Sigmoid colon (tissue), 7 donors: ENCODE measurements at regions of chr19 and their contacts with region 1.

Region 1: DNA sequence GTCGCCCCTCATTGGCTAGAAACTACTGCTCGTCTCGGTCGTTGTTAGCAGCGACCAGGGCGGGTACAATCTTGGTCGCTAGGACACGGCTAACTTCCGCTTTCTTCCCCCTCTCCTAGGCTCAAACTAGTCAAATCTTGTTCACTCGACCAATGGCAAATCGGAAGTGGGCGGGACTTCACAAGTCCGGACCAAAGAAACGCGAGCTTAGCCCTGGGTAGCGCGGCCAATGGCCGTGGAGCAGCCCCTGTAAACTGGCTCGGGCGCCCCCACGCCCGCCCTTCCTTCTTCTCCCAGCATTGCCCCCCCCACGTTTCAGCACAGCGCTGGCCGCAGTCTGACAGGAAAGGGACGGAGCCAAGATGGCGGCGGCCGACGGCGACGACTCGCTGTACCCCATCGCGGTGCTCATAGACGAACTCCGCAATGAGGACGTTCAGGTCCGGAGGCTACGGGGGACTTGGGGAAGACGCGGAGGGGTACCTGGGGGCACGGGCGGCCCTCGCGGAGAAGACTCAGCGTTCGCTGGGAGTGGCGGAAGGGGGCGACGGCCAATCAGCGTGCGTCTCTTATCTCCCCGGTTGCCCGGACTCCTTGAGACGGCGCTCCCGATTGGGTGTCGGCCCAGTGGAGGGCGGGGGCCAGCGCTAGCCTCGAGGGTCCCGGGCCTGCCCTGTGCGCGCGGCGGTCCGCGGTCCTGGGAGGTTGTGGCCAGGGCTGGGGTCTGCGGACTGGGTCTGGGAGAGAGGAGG is at the start of gene PPP2R1A:
- DNase-seq: peak; percentile 100
- H3K4me3 ChIP-seq: peak within 1 kb of the TSS; percentile 77 to 82 (median 80)
- H3K27ac ChIP-seq: peak within 1 kb of the TSS; percentile 94 to 97 (median 95)
- H3K4me1 ChIP-seq: peaks cover 0 to 53% (median 49%) of the 10 kb centered on the region in 4 donors
- H3K27me3 ChIP-seq: no peaks in the 10 kb centered on the region
- CTCF ChIP-seq: no peak
- EP300 ChIP-seq: no peak
- POLR2A ChIP-seq: peak; percentile 94 to 97
- total RNA-seq, gene PPP2R1A: 127 to 163 (median 137) TPM

Region 2: DNA sequence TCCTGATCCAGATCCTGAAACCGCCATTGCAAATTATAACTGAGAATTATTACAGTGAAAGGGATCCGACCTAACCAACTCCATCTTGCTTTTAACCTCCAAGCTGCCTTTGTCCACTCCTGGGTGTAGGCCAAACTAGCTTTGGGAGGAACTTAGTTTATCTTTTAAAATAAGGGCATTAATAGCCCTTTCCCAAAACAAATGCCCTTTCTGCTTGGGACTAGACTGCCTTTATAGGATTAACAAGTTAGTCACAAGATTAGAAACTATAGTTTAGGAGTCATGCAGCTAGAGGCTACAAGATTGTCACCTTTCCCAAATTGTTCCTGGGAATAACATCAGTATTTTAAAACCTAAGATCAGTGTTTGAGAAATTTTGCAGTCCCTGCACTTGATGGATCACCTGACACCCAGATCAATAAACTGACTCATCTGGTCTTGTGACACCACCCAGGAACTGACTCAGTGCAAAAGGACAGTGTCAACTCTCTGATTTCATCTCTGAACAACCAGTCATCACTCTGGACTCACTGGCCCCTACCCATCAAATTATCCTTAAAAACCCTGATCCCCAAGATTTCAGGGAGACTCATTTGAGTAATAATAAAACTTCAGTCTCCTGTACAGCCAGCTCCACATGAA is 90.3 kb before region 1 on chr19:
- intact Hi-C with region 1: no loop called
- DNase-seq: no peak
- H3K4me3 ChIP-seq: no peak overlapping the region
- H3K27ac ChIP-seq: no peak overlapping the region
- H3K4me1 ChIP-seq: peaks cover 0 to 5% (median 3%) of the 10 kb centered on the region in 4 donors
- H3K27me3 ChIP-seq: no peaks in the 10 kb centered on the region
- CTCF ChIP-seq: no peak
- EP300 ChIP-seq: no peak
- POLR2A ChIP-seq: no peak

Region 3: GRCh38 chr19:52171321-52172169 is 18.4 kb before region 1 on chr19 and contains the start of gene ZNF836:
- intact Hi-C with region 1: loop called (anchors 1 kb)
- DNase-seq: peak; percentile 96
- H3K4me3 ChIP-seq: peak within 1 kb of the TSS; percentile 78 to 90 (median 88)
- H3K27ac ChIP-seq: peak within 1 kb of the TSS; percentile 87 to 90 (median 88)
- H3K4me1 ChIP-seq: peaks cover 0 to 21% (median 12%) of the 10 kb centered on the region in 4 donors
- H3K27me3 ChIP-seq: no peaks in the 10 kb centered on the region
- CTCF ChIP-seq: no peak
- EP300 ChIP-seq: no peak
- POLR2A ChIP-seq: no peak
- total RNA-seq, gene ZNF836: 9.1 to 12.3 (median 9.9) TPM

Region 4: DNA sequence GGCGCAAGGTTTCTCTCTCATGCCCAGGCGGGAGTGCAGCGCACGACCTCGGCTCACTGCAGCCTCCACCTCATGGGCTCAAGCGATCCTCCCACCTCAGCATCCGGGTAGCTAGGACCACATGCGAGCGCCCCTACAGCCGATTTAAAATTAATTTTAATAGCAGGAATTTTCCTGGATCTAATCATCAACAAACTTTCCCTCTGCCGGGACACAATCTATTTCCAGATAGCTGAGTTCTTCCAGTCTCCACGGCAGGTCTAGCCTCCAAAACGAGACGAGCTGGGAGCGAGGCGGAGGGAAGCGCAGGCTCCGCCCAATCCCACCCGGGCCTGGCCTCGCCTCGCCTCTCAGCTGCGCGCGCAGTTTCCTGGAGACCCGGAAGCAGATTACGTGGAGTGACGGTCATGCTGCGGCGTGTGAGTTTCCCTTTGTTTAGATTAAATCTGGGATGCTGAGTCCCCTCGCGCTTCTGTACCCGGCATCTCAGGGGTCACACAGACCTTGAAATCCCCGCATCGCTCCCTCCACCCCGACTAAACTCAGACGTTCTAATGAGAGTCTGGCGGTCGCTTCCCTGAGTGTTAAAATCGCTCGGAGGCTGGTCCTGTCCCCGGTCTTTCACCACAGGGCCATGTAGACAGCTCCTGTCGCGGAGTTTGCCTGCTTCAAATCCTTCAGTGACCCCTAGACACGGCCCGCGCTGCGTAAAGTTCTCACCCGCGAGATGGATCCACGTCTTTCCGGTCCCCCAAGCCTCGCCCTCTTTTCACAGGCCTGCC is 179.8 kb after region 1 on chr19 and contains the start of gene ZNF880:
- intact Hi-C with region 1: no loop called
- DNase-seq: peak; percentile 96
- H3K4me3 ChIP-seq: peak within 1 kb of the TSS; percentile 64 to 79 (median 71)
- H3K27ac ChIP-seq: peak within 1 kb of the TSS; percentile 90 to 95 (median 90)
- H3K4me1 ChIP-seq: peaks cover 0 to 8% (median 4%) of the 10 kb centered on the region in 4 donors
- H3K27me3 ChIP-seq: no peaks in the 10 kb centered on the region
- CTCF ChIP-seq: no peak
- EP300 ChIP-seq: no peak
- POLR2A ChIP-seq: peak in 1 of 2 donors; percentile 43
- total RNA-seq, gene ZNF880: 21.6 to 24.8 (median 23.0) TPM